CD4-positive, alpha-beta memory T cell (primary cell): ENCODE measurements at regions of chr7 and their contacts with region 1.

Region 1: GRCh38 chr7:50266635-50267386 is 37.7 kb upstream of the IKZF1 start:
- DNase-seq: peak; percentile 79 to 89 (median 83)
- H3K4me3 ChIP-seq: peak overlapping the region in 1 of 2 donors; percentile 16
- H3K4me3 Mint-ChIP-seq: peak overlapping the region; percentile 61 to 93 (median 82)
- H3K27ac ChIP-seq: peak overlapping the region; percentile 49
- H3K27ac Mint-ChIP-seq: peak overlapping the region; percentile 91 to 97 (median 96)
- H3K4me1 ChIP-seq: peaks cover 100% of the 10 kb centered on the region
- H3K4me1 Mint-ChIP-seq: peaks cover 86 to 100% (median 93%) of the 10 kb centered on the region in 4 donors
- H3K27me3 ChIP-seq: no peaks in the 10 kb centered on the region
- H3K27me3 Mint-ChIP-seq: no peaks in the 10 kb centered on the region

Region 2: GRCh38 chr7:50229964-50230363 is 36.8 kb before region 1 on chr7:
- CTCF ChIA-PET with region 1: interaction called, 47 read pairs
- POLR2A ChIA-PET with region 1: interaction called, 124 read pairs
- intact Hi-C with region 1: loop called (anchors 5 kb)
- DNase-seq: no peak
- H3K4me3 ChIP-seq: no peak overlapping the region
- H3K4me3 Mint-ChIP-seq: no peak overlapping the region
- H3K27ac ChIP-seq: no peak overlapping the region
- H3K27ac Mint-ChIP-seq: no peak overlapping the region
- H3K4me1 ChIP-seq: peaks cover 38% of the 10 kb centered on the region
- H3K4me1 Mint-ChIP-seq: peaks cover 31 to 42% (median 36%) of the 10 kb centered on the region in 4 donors
- H3K27me3 ChIP-seq: no peaks in the 10 kb centered on the region
- H3K27me3 Mint-ChIP-seq: no peaks in the 10 kb centered on the region

Region 3: GRCh38 chr7:50284296-50284695 is 17.5 kb after region 1 on chr7:
- CTCF ChIA-PET with region 1: interaction called, 6 read pairs
- POLR2A ChIA-PET with region 1: interaction called, 6 read pairs
- intact Hi-C with region 1: loop called (anchors 2 kb)
- DNase-seq: no peak
- H3K4me3 ChIP-seq: no peak overlapping the region
- H3K4me3 Mint-ChIP-seq: no peak overlapping the region
- H3K27ac ChIP-seq: no peak overlapping the region
- H3K27ac Mint-ChIP-seq: no peak overlapping the region
- H3K4me1 ChIP-seq: peaks cover 26% of the 10 kb centered on the region
- H3K4me1 Mint-ChIP-seq: peaks cover 27 to 51% (median 33%) of the 10 kb centered on the region in 4 donors
- H3K27me3 ChIP-seq: no peaks in the 10 kb centered on the region
- H3K27me3 Mint-ChIP-seq: no peaks in the 10 kb centered on the region

Region 4: DNA sequence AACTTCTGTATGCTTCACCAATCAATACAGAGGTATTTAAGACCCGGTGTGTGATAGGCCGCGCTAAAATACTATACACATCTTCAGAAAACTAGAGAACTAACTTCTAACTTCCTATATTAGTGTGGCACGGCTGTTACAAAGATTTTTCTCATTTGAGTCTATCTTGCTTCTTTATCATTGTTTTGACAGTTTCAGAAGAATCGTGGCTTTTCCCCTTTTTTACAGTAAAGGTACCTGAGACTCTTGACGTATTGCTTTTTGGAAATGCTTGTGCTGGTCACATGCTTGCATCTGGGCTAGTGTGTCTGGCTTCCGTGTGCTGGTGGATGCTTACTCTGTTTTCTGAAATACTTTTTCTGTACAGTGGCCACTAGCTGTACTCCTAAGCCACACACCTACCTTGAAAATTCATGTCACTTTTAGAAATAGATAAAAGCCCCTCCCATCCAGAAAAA is 50.4 kb after region 1 on chr7:
- CTCF ChIA-PET with region 1: interaction called, 8 read pairs
- POLR2A ChIA-PET with region 1: interaction called, 575 read pairs
- intact Hi-C with region 1: no loop called
- DNase-seq: peak; percentile 78 to 89 (median 84)
- H3K4me3 ChIP-seq: peak overlapping the region in 1 of 2 donors; percentile 53
- H3K4me3 Mint-ChIP-seq: peak overlapping the region; percentile 78 to 100 (median 92)
- H3K27ac ChIP-seq: peak overlapping the region; percentile 90
- H3K27ac Mint-ChIP-seq: peak overlapping the region in 6 of 7 donors; percentile 93 to 99 (median 98)
- H3K4me1 ChIP-seq: peaks cover 99% of the 10 kb centered on the region
- H3K4me1 Mint-ChIP-seq: peaks cover 73 to 100% (median 86%) of the 10 kb centered on the region in 4 donors
- H3K27me3 ChIP-seq: no peaks in the 10 kb centered on the region
- H3K27me3 Mint-ChIP-seq: no peaks in the 10 kb centered on the region

Region 5: GRCh38 chr7:50349963-50350944 is 83.4 kb after region 1 on chr7:
- CTCF ChIA-PET with region 1: no interaction called
- POLR2A ChIA-PET with region 1: interaction called, 188 read pairs
- intact Hi-C with region 1: no loop called
- DNase-seq: peak; percentile 46 to 89 (median 52)
- H3K4me3 ChIP-seq: peak overlapping the region in 1 of 2 donors; percentile 29
- H3K4me3 Mint-ChIP-seq: peak overlapping the region; percentile 69 to 88 (median 78)
- H3K27ac ChIP-seq: peak overlapping the region; percentile 96
- H3K27ac Mint-ChIP-seq: peak overlapping the region in 6 of 7 donors; percentile 97 to 100 (median 98)
- H3K4me1 ChIP-seq: peaks cover 100% of the 10 kb centered on the region
- H3K4me1 Mint-ChIP-seq: peaks cover 79 to 98% (median 92%) of the 10 kb centered on the region in 4 donors
- H3K27me3 ChIP-seq: no peaks in the 10 kb centered on the region
- H3K27me3 Mint-ChIP-seq: no peaks in the 10 kb centered on the region